ENCODE measurements at regions of chr1 and their contacts with region 1.

Region 1: DNA sequence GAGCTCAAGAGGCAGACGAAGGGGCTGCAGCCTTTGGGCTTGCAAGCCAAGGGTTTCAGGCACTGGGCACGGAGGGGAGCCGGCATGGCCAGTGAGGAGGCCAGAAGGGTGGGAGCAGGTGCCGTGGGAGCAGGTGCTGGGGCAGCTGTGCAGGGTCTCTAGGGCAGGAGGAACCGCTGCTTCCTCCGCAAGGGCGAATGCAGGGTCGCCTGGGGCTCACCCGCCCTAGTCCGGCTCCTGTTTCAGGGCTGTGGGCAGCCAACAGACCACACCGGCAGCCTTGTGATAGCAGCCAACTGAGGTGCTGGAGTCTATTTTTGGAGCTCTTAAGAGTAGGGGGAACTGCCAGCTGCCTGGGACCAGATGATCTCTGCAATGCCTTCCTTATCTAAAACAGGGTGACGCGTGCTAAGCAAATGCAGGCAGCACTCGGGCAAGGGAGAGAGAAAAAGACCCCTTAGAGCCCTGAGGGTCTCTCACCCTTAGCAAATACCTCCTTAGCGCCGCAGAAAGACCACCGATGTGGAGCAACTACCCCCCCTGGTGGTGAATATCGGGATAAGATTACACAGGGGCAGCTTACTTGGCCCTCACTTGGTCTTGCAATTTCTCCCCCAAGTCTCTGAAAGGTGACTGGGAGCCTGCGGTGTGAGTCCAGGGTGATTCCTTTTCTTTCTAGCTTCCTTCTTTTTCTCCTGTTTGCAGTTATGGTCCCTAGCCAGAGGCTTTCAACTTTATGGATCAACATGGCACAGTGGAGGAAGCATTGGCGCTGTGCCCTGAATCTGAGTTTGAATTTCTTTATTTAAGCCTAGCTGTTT is 20.7 kb upstream of the MAPKAPK2 start:
- DNase-seq: no peak
- ATAC-seq: peak; percentile 94
- H3K4me3 ChIP-seq: peak overlapping the region; percentile 44; the same call in 1 of the 2 replicates
- H3K27ac ChIP-seq: no peak overlapping the region
- H3K4me1 ChIP-seq: peaks cover 10% of the 10 kb centered on the region
- H3K27me3 ChIP-seq: no peaks in the 10 kb centered on the region
- CTCF ChIP-seq: peak; percentile 81 to 85 (median 84)
- EP300 ChIP-seq: no peak
- POLR2A ChIP-seq: no peak
- RAD21 ChIP-seq: peak; percentile 89

Region 2: GRCh38 chr1:206461602-206462455 is 202.2 kb before region 1 on chr1:
- CTCF ChIA-PET with region 1: interaction called, 16 read pairs
- POLR2A ChIA-PET with region 1: no interaction called
- RAD21 ChIA-PET with region 1: interaction called, 5 read pairs
- SMC1A ChIA-PET with region 1: interaction called, 9 read pairs
- in situ Hi-C with region 1: no loop called
- intact Hi-C with region 1: no loop called
- DNase-seq: no peak
- ATAC-seq: peak; percentile 90
- H3K4me3 ChIP-seq: no peak overlapping the region
- H3K27ac ChIP-seq: no peak overlapping the region
- H3K4me1 ChIP-seq: peaks cover 23% of the 10 kb centered on the region
- H3K27me3 ChIP-seq: no peaks in the 10 kb centered on the region
- CTCF ChIP-seq: peak; percentile 76 to 86 (median 84)
- EP300 ChIP-seq: no peak
- POLR2A ChIP-seq: no peak
- RAD21 ChIP-seq: peak; percentile 73

Region 3: DNA sequence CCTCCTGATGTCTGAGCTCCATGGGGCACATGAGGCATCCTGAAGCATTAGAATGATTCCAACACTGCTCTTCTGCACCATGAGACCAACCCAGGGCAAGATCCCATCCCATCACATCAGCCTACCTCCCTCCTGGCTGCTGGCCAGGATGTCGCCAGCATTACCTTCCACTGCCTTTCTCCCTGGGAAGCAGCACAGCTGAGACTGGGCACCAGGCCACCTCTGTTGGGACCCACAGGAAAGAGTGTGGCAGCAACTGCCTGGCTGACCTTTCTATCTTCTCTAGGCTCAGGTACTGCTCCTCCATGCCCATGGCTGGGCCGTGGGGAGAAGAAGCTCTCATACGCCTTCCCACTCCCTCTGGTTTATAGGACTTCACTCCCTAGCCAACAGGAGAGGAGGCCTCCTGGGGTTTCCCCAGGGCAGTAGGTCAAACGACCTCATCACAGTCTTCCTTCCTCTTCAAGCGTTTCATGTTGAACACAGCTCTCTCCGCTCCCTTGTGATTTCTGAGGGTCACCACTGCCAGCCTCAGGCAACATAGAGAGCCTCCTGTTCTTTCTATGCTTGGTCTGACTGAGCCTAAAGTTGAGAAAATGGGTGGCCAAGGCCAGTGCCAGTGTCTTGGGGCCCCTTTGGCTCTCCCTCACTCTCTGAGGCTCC is 167.8 kb before region 1 on chr1:
- CTCF ChIA-PET with region 1: interaction called, 22 read pairs
- POLR2A ChIA-PET with region 1: interaction called, 4 read pairs
- RAD21 ChIA-PET with region 1: interaction called, 10 read pairs
- SMC1A ChIA-PET with region 1: interaction called, 15 read pairs
- in situ Hi-C with region 1: no loop called
- intact Hi-C with region 1: loop called (anchors 5 kb)
- DNase-seq: no peak
- ATAC-seq: peak; percentile 88
- H3K4me3 ChIP-seq: peak overlapping the region; percentile 34; the same call in 1 of the 2 replicates
- H3K27ac ChIP-seq: peak overlapping the region; percentile 90
- H3K4me1 ChIP-seq: peaks cover 39% of the 10 kb centered on the region
- H3K27me3 ChIP-seq: no peaks in the 10 kb centered on the region
- CTCF ChIP-seq: no peak
- EP300 ChIP-seq: 0 out of 4 replicates have a peak, but pooled peaks of 1 of the 2 experiments have one; percentile 29
- POLR2A ChIP-seq: no peak
- RAD21 ChIP-seq: no peak

Region 4: GRCh38 chr1:206590025-206590758 is 73.8 kb before region 1 on chr1:
- CTCF ChIA-PET with region 1: interaction called, 33 read pairs
- POLR2A ChIA-PET with region 1: interaction called, 6 read pairs
- RAD21 ChIA-PET with region 1: interaction called, 7 read pairs
- SMC1A ChIA-PET with region 1: interaction called, 3 read pairs
- in situ Hi-C with region 1: no loop called
- intact Hi-C with region 1: loop called (anchors 1 kb)
- DNase-seq: no peak
- ATAC-seq: peak; percentile 89
- H3K4me3 ChIP-seq: no peak overlapping the region
- H3K27ac ChIP-seq: peak overlapping the region; percentile 34
- H3K4me1 ChIP-seq: peaks cover 6% of the 10 kb centered on the region; the same call in 1 of the 2 replicates
- H3K27me3 ChIP-seq: no peaks in the 10 kb centered on the region
- CTCF ChIP-seq: peak; percentile 38 to 58 (median 42); a peak in 5 of 6 replicates
- EP300 ChIP-seq: no peak
- POLR2A ChIP-seq: peak; percentile 48; the same call in 1 of the 2 replicates
- RAD21 ChIP-seq: 0 out of 2 replicates have a peak, but pooled peaks have one; percentile 26

Region 5: GRCh38 chr1:206674745-206675175 is 10.7 kb after region 1 on chr1:
- CTCF ChIA-PET with region 1: interaction called, 95 read pairs
- POLR2A ChIA-PET with region 1: interaction called, 12 read pairs
- RAD21 ChIA-PET with region 1: interaction called, 33 read pairs
- SMC1A ChIA-PET with region 1: interaction called, 69 read pairs
- in situ Hi-C with region 1: no loop called
- intact Hi-C with region 1: no loop called
- DNase-seq: no peak
- ATAC-seq: no peak
- H3K4me3 ChIP-seq: no peak overlapping the region
- H3K27ac ChIP-seq: no peak overlapping the region
- H3K4me1 ChIP-seq: peaks cover 51% of the 10 kb centered on the region
- H3K27me3 ChIP-seq: no peaks in the 10 kb centered on the region
- CTCF ChIP-seq: no peak
- EP300 ChIP-seq: no peak
- POLR2A ChIP-seq: no peak
- RAD21 ChIP-seq: no peak

Region 6: GRCh38 chr1:206716870-206717673 is 53.0 kb after region 1 on chr1:
- CTCF ChIA-PET with region 1: interaction called, 37 read pairs
- POLR2A ChIA-PET with region 1: interaction called, 3 read pairs
- RAD21 ChIA-PET with region 1: interaction called, 30 read pairs
- SMC1A ChIA-PET with region 1: interaction called, 67 read pairs
- in situ Hi-C with region 1: no loop called
- intact Hi-C with region 1: no loop called
- DNase-seq: peak; percentile 88
- ATAC-seq: peak; percentile 78
- H3K4me3 ChIP-seq: 0 out of 2 replicates have a peak overlapping the region, but pooled peaks have one; percentile 19
- H3K27ac ChIP-seq: peak overlapping the region; percentile 73
- H3K4me1 ChIP-seq: peaks cover 74% of the 10 kb centered on the region
- H3K27me3 ChIP-seq: no peaks in the 10 kb centered on the region
- CTCF ChIP-seq: no peak
- EP300 ChIP-seq: peak in 1 of 2 experiments; percentile 34; a peak in 1 of 4 replicates
- POLR2A ChIP-seq: no peak
- RAD21 ChIP-seq: no peak

Region 7: GRCh38 chr1:206808615-206809014 is 144.6 kb after region 1 on chr1:
- CTCF ChIA-PET with region 1: interaction called, 35 read pairs
- POLR2A ChIA-PET with region 1: interaction called, 3 read pairs
- RAD21 ChIA-PET with region 1: interaction called, 21 read pairs
- SMC1A ChIA-PET with region 1: interaction called, 52 read pairs
- in situ Hi-C with region 1: no loop called
- intact Hi-C with region 1: no loop called
- DNase-seq: no peak
- ATAC-seq: peak; percentile 99
- H3K4me3 ChIP-seq: no peak overlapping the region
- H3K27ac ChIP-seq: no peak overlapping the region
- H3K4me1 ChIP-seq: peaks cover 11% of the 10 kb centered on the region
- H3K27me3 ChIP-seq: no peaks in the 10 kb centered on the region
- CTCF ChIP-seq: peak; percentile 69 to 92 (median 70)
- EP300 ChIP-seq: no peak
- POLR2A ChIP-seq: no peak
- RAD21 ChIP-seq: peak; percentile 99

Region 8: GRCh38 chr1:207032528-207033017 is 368.5 kb after region 1 on chr1 and contains the start of gene C1orf116:
- CTCF ChIA-PET with region 1: no interaction called
- POLR2A ChIA-PET with region 1: no interaction called
- RAD21 ChIA-PET with region 1: no interaction called
- SMC1A ChIA-PET with region 1: no interaction called
- in situ Hi-C with region 1: no loop called
- intact Hi-C with region 1: no loop called
- DNase-seq: no peak
- ATAC-seq: no peak
- H3K4me3 ChIP-seq: no peak within 1 kb of the TSS
- H3K27ac ChIP-seq: no peak within 1 kb of the TSS
- H3K4me1 ChIP-seq: no peaks in the 10 kb centered on the region
- H3K27me3 ChIP-seq: peaks cover 3 to 7% of the 10 kb centered on the region in 2 experiments; a peak in 3 of 4 replicates
- CTCF ChIP-seq: no peak
- EP300 ChIP-seq: no peak
- POLR2A ChIP-seq: no peak
- RAD21 ChIP-seq: no peak
- polyA plus RNA-seq, gene C1orf116: not detected

Measured in GM12878 (cell line).